Activated CD4-positive, alpha-beta T cell treated with anti-CD3 and anti-CD28 coated beads, Interleukin-2, amount 10 ng/mL, durations not matched to agents 24 days and 14 days (primary cell): ENCODE measurements at regions of chr7 and their contacts with region 1.

Region 1: GRCh38 chr7:141585592-141586510 is 34.6 kb downstream of the AGK start:
- DNase-seq: peak; percentile 65
- H3K4me3 Mint-ChIP-seq: peak overlapping the region; percentile 61
- H3K27ac Mint-ChIP-seq: peak overlapping the region; percentile 94
- H3K4me1 Mint-ChIP-seq: peaks cover 58% of the 10 kb centered on the region
- H3K27me3 Mint-ChIP-seq: no peaks in the 10 kb centered on the region

Region 2: DNA sequence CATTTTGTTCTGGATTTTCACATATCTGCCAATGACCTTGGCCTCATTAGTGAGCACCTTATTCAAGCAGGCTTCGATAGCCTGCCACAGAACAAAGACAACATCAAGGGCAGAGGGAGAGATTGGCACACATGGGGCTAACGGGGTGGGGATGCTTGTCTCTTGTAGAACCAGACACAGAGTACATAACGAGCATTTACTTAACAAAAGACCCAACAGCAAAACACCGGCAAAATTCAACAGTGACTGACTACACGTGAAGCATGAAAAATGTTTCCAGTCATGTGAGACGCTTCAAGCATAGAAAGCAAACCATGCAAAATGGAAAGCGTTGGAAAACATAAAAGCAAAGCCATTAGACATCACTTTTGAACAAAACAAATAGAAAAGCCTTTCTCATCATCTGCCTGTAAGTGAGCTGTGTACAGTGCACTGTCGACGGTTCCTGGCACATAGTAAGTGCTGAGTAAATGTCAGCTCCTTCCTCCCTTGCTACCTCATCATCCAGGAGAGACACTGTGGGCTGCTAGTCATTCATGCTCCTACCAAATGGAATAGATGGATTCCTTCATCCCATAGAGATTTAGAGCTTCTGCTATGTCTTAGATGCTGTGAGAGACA is 169.1 kb before region 1 on chr7:
- intact Hi-C with region 1: no loop called
- DNase-seq: no peak
- H3K4me3 Mint-ChIP-seq: no peak overlapping the region
- H3K27ac Mint-ChIP-seq: no peak overlapping the region
- H3K4me1 Mint-ChIP-seq: no peaks in the 10 kb centered on the region
- H3K27me3 Mint-ChIP-seq: peaks cover 9% of the 10 kb centered on the region

Region 3: GRCh38 chr7:141497391-141497790 is 88.5 kb before region 1 on chr7:
- intact Hi-C with region 1: no loop called
- DNase-seq: no peak
- H3K4me3 Mint-ChIP-seq: no peak overlapping the region
- H3K27ac Mint-ChIP-seq: no peak overlapping the region
- H3K4me1 Mint-ChIP-seq: peaks cover 2% of the 10 kb centered on the region
- H3K27me3 Mint-ChIP-seq: peaks cover 21% of the 10 kb centered on the region

Region 4: GRCh38 chr7:141551094-141551781 is 34.6 kb before region 1 on chr7 and contains the start of gene AGK:
- intact Hi-C with region 1: loop called (anchors 1 kb)
- DNase-seq: peak; percentile 95
- H3K4me3 Mint-ChIP-seq: peak within 1 kb of the TSS; percentile 89
- H3K27ac Mint-ChIP-seq: peak within 1 kb of the TSS; percentile 93
- H3K4me1 Mint-ChIP-seq: peaks cover 43% of the 10 kb centered on the region
- H3K27me3 Mint-ChIP-seq: no peaks in the 10 kb centered on the region
- total RNA-seq, gene AGK: 146 and 151 TPM in 2 replicates

Region 5: GRCh38 chr7:141558544-141559183 is 27.2 kb before region 1 on chr7:
- intact Hi-C with region 1: loop called (anchors 1 kb)
- DNase-seq: peak; percentile 79
- H3K4me3 Mint-ChIP-seq: peak overlapping the region; percentile 59
- H3K27ac Mint-ChIP-seq: peak overlapping the region; percentile 86
- H3K4me1 Mint-ChIP-seq: peaks cover 63% of the 10 kb centered on the region
- H3K27me3 Mint-ChIP-seq: no peaks in the 10 kb centered on the region

Region 6: GRCh38 chr7:141563956-141564631 is 21.8 kb before region 1 on chr7:
- intact Hi-C with region 1: loop called (anchors 1 kb)
- DNase-seq: peak; percentile 71
- H3K4me3 Mint-ChIP-seq: peak overlapping the region; percentile 34
- H3K27ac Mint-ChIP-seq: peak overlapping the region; percentile 89
- H3K4me1 Mint-ChIP-seq: peaks cover 60% of the 10 kb centered on the region
- H3K27me3 Mint-ChIP-seq: no peaks in the 10 kb centered on the region

Region 7: DNA sequence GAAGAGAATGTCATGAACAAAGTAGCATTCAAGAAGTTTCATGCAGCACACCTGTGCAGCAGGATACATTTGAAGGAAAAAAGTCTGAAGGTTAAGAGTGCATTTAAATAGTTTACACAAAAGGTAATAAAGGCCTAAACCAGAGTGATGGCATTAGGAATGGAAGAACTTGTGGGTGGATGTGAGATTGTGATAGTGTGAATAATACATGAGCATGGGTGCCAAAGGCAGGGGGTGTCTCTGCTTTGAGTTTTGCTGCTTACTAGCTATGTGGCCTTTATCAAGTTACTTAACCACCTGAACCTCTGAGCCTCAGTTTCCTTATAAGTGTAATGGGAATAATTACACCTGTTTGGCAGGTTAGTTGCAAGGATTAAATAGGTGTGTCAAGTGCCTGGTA is 13.7 kb before region 1 on chr7:
- intact Hi-C with region 1: loop called (anchors 1 kb)
- DNase-seq: no peak
- H3K4me3 Mint-ChIP-seq: peak overlapping the region; percentile 37
- H3K27ac Mint-ChIP-seq: peak overlapping the region; percentile 49
- H3K4me1 Mint-ChIP-seq: peaks cover 29% of the 10 kb centered on the region
- H3K27me3 Mint-ChIP-seq: no peaks in the 10 kb centered on the region

Region 8: DNA sequence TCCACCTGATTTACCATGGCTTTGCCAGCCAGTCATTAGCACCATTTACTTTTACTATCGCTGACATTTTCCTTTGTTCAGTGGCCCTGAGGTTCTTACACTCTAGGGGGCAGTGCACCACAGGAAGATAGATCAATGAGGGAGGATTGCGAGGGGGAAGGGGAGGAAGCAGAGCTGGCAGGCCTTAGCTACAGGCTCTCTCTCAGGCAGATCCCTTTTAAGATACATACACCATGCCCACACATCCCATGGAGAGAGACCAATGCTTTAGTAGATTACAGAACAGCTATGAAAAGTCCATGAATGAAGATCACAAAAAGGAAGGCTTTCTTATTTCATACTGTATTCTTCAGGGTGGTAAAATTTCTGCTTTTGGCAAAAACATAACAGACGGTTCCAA is 68.7 kb after region 1 on chr7:
- intact Hi-C with region 1: no loop called
- DNase-seq: peak; percentile 90
- H3K4me3 Mint-ChIP-seq: no peak overlapping the region
- H3K27ac Mint-ChIP-seq: peak overlapping the region; percentile 73
- H3K4me1 Mint-ChIP-seq: peaks cover 4% of the 10 kb centered on the region
- H3K27me3 Mint-ChIP-seq: no peaks in the 10 kb centered on the region